ENCODE measurements at regions of chr14 and their contacts with region 1.

Region 1: GRCh38 chr14:74905375-74906142 is 17.5 kb downstream of the RPS6KL1 start:
- DNase-seq: peak; percentile 57 to 87 (median 70)
- H3K4me3 ChIP-seq: no peak overlapping the region
- H3K27ac ChIP-seq: no peak overlapping the region
- H3K4me1 ChIP-seq: peaks cover 0 to 12% (median 0%) of the 10 kb centered on the region in 3 donors
- H3K27me3 ChIP-seq: no peaks in the 10 kb centered on the region
- CTCF ChIP-seq: peak; percentile 95

Region 2: DNA sequence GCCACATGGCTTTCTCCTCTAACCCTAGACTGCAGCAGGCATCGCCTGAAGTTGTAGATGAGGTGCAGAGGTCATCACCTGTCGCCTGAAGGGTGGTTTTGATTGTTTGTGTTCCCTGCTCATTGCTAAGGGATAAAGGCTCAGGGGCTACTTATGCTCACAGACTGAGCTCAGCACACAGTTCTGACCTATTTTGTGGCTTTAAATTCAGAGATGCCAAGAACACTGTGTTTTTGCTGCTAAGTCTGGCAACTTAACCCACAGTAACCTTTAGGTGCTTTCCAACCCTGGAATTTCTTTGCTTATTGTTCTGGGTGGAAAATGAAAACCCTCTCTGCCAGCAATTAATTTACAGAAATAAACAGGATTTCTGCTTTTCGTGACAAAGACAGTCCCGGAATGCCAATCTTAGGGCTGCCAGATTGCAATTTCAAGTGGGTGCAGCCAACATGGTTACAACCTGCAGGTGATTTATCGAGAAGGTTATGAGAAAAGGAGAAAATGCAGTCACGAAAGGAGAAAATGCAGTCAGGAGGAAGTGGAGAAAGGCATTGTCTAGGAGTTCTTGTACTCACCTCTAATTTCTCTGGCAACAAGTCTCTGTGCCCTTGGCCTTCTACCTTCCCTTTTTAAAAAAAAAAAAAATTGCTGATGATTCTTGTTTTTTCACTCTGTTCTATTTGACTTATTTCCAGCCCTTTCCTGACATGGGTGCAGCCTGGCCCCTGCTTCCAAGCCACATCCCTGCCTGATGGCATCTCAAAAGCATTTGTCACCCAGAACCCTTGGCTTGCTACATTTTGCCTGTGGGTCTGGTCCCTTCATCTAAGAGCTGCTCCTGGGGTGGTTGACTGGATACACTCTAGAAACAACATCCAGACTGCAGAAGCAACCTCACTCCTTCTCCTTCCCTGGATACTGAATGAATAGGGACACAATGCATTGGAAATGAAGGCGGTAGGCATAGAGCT is 435.7 kb before region 1 on chr14:
- intact Hi-C with region 1: no loop called
- DNase-seq: peak in 1 of 5 donors; percentile 29
- H3K4me3 ChIP-seq: no peak overlapping the region
- H3K27ac ChIP-seq: no peak overlapping the region
- H3K4me1 ChIP-seq: no peaks in the 10 kb centered on the region
- H3K27me3 ChIP-seq: no peaks in the 10 kb centered on the region
- CTCF ChIP-seq: no peak

Region 3: DNA sequence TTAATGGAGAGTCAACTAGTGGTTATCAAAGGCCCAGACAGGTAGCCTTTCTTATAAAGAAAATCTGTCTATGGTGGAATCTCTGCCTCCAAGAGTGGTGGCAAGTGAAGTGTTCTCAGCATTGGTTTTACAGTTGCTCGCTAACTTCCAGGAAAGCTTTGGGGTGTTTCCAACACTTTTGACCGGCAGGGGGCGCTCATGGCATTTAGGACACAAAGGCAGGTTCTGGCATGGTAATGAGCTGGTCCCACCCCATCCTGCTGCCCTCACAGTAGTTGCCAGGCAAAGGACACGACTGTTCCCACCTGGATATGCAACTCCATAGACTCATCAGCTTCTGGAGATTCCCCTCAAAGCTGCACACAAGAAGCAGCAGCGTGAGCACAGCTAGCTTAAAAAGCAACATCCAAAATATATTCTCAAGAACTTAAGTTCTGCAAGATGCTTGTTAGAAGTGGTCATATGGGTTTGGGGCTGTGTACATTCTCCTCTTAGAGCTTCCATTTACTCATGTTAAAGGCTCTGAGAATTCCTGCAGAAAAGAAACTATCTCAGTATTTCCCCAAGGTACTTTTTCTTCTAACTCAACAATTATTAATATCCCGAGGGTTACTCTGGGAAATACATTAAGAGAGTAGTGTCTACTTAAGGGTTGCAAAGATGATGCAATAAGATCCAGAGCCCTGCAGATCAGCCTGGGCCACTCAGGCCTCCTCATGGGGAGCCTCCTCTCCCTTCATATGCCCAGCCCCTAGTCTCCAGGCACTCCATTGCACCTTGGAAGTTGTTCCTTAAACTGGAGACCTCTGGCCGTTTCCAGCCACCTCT is 44.4 kb before region 1 on chr14:
- intact Hi-C with region 1: loop called (anchors 5 kb)
- DNase-seq: peak; percentile 90 to 95 (median 91)
- H3K4me3 ChIP-seq: no peak overlapping the region
- H3K27ac ChIP-seq: no peak overlapping the region
- H3K4me1 ChIP-seq: no peaks in the 10 kb centered on the region
- H3K27me3 ChIP-seq: no peaks in the 10 kb centered on the region
- CTCF ChIP-seq: peak; percentile 86